B cell (primary cell): ENCODE measurements at regions of chr10 and their contacts with region 1.

Region 1: DNA sequence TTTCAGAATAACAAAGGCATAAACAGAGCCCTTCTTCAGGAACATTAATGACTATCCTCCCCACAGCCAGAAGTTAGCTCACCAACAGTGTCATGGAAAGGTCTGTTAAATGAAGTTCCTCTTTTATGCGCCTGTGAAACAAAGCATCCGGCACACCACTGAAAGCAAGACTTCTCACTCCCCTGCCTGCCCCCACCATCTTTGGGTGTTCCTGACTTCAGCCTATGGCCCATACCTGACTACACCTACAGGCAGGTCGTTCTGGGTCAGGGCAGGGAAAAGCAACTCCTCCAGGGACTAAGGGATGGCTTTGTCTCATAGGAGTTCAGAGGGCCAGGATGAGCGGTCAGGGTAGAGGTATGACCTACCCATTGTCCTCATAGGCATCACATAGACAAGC is 205.4 kb downstream of the FANK1 start:
- DNase-seq: peak; percentile 60
- ATAC-seq: peak; percentile 92
- H3K4me3 ChIP-seq: no peak overlapping the region
- H3K4me3 Mint-ChIP-seq: no peak overlapping the region
- H3K27ac ChIP-seq: no peak overlapping the region
- H3K27ac Mint-ChIP-seq: peak overlapping the region; percentile 50
- H3K4me1 ChIP-seq: peaks cover 8 to 15% of the 10 kb centered on the region in 2 donors
- H3K4me1 Mint-ChIP-seq: peaks cover 15% of the 10 kb centered on the region
- H3K27me3 ChIP-seq: no peaks in the 10 kb centered on the region
- H3K27me3 Mint-ChIP-seq: peaks cover 2% of the 10 kb centered on the region
- CTCF ChIP-seq: no peak

Region 2: DNA sequence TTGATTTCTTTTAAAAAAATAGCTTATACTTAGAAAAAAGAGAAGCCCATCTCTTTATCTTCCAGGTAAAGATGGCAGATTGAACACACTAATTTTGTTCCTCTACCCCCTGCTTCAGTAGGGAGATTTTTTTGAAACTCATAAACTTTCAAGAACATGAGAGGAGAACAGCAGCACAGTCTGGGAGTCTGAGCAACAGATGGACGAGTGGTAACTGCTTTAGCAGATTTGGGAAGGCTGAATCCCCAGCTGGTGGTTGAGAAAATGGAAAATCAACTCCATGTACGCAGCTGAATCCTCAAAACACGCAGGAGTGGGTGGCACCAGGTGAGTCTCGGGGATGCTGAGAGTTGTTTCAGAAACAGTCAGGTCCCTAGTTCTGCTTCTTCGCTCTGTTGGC is 826.8 kb before region 1 on chr10:
- CTCF ChIA-PET with region 1: no interaction called
- POLR2A ChIA-PET with region 1: no interaction called
- intact Hi-C with region 1: no loop called
- DNase-seq: no peak
- ATAC-seq: no peak
- H3K4me3 ChIP-seq: no peak overlapping the region
- H3K4me3 Mint-ChIP-seq: no peak overlapping the region
- H3K27ac ChIP-seq: no peak overlapping the region
- H3K27ac Mint-ChIP-seq: no peak overlapping the region
- H3K4me1 ChIP-seq: no peaks in the 10 kb centered on the region
- H3K4me1 Mint-ChIP-seq: no peaks in the 10 kb centered on the region
- H3K27me3 ChIP-seq: no peaks in the 10 kb centered on the region
- H3K27me3 Mint-ChIP-seq: peaks cover 15% of the 10 kb centered on the region
- CTCF ChIP-seq: no peak

Region 3: GRCh38 chr10:125976960-125977603 is 124.7 kb before region 1 on chr10:
- CTCF ChIA-PET with region 1: interaction called, 74 read pairs
- POLR2A ChIA-PET with region 1: no interaction called
- intact Hi-C with region 1: loop called (anchors 1 kb)
- DNase-seq: no peak
- ATAC-seq: no peak
- H3K4me3 ChIP-seq: no peak overlapping the region
- H3K4me3 Mint-ChIP-seq: no peak overlapping the region
- H3K27ac ChIP-seq: no peak overlapping the region
- H3K27ac Mint-ChIP-seq: no peak overlapping the region
- H3K4me1 ChIP-seq: no peaks in the 10 kb centered on the region
- H3K4me1 Mint-ChIP-seq: peaks cover under 1% of the 10 kb centered on the region
- H3K27me3 ChIP-seq: peaks cover 0 to 2% (median 0%) of the 10 kb centered on the region in 4 experiments
- H3K27me3 Mint-ChIP-seq: peaks cover 26% of the 10 kb centered on the region
- CTCF ChIP-seq: no peak

Region 4: DNA sequence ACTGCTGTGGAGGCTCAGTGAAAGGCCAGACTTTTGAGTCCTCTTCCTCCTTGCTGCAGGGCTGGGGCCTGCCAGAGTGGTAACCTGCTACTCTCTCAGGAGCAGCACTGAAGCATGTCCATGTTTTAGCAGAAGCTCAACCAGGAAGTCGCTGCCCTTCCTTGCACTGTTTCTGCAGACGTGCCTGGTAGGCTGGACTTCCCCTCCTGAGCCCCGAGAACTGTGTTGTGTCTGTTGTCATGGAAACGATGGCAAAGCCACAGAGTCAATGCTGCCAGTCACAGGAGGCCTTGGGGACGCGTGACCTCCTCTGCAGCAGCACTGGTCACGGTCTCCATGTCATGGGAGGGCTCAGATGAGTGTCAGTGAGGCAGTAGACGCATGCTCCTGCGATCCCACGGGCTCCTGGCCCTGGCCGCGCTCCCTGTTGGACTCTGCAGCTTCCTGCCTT is 60.0 kb before region 1 on chr10:
- CTCF ChIA-PET with region 1: interaction called, 3 read pairs
- POLR2A ChIA-PET with region 1: no interaction called
- intact Hi-C with region 1: loop called (anchors 2 kb)
- DNase-seq: peak; percentile 99
- ATAC-seq: peak; percentile 92
- H3K4me3 ChIP-seq: peak overlapping the region in 4 of 5 experiments; percentile 12 to 49 (median 38)
- H3K4me3 Mint-ChIP-seq: peak overlapping the region; percentile 87
- H3K27ac ChIP-seq: peak overlapping the region; percentile 96 to 98
- H3K27ac Mint-ChIP-seq: peak overlapping the region; percentile 99
- H3K4me1 ChIP-seq: peaks cover 38 to 41% of the 10 kb centered on the region in 2 donors
- H3K4me1 Mint-ChIP-seq: peaks cover 57% of the 10 kb centered on the region
- H3K27me3 ChIP-seq: no peaks in the 10 kb centered on the region
- H3K27me3 Mint-ChIP-seq: no peaks in the 10 kb centered on the region
- CTCF ChIP-seq: no peak